Activated T-helper 1 cell treated with anti-CD3 and anti-CD28 coated beads, Interleukin-12 subunit alpha, Interleukin-12 subunit beta, Interleukin-2, Interleukin-4 antibody, amounts not matched to agents 30 ng/mL and 10 ng/mL and 1 ng/mL, durations not matched to agents 14 hours and 24 hours and 36 hours (primary cell): ENCODE measurements at regions of chr1 and their contacts with region 1.

Region 1: GRCh38 chr1:32394141-32394889 is at the start of gene BSDC1:
- DNase-seq: peak; percentile 98
- H3K4me3 Mint-ChIP-seq: peak within 1 kb of the TSS; percentile 97
- H3K27ac Mint-ChIP-seq: peak within 1 kb of the TSS; percentile 99
- H3K4me1 Mint-ChIP-seq: peaks cover 16% of the 10 kb centered on the region
- H3K27me3 Mint-ChIP-seq: peaks cover 7% of the 10 kb centered on the region
- total RNA-seq, gene BSDC1: 48.8 and 50.3 TPM in 2 replicates

Region 2: DNA sequence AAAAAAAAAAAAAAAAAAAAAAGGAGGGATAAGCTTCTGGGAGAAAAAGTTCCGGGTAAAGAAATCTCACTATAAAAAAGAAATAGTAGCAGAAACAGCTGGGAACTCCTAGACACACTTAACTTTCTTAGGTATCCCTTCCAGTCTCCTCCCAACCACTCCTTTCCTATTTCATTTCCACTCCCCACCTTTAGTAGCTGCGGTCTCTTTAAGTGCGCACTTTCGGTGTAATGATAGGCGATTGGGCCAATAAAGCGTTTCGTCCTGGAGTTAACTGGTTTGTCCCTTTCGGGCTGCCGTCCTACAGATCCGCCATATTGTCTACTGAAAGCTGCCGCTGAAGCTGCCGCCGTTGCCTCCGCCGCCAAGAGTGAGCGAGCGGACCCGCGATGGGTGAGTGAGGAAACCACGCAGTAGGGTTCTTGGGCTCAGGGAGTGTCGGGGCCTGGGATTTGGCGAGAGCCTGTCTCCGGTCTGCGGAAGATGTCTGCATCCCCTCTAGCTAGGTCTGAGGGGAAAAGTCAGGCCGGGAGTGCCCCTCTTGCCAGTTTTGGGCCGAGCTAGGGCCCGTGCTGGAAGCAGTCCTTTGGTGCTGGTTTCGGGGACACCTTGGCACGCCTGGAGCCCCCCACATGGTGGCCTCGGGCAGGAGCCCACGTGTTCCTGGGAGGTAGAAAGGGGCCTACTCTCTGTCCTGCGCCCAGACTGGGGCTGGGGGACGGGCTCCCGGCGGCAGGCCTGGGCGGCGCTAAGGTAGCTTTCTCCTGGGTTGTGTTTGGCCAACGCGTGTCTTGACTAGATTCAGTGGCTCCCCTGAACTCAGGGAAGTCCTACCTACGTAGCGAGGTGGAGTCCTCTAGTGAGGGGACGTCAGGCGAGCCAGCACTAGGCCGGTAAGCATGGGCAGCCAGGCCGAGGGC is 286.3 kb before region 1 on chr1 and contains the start of gene KPNA6:
- intact Hi-C with region 1: loop called (anchors 1 kb)
- DNase-seq: peak; percentile 89
- H3K4me3 Mint-ChIP-seq: peak within 1 kb of the TSS; percentile 98
- H3K27ac Mint-ChIP-seq: peak within 1 kb of the TSS; percentile 94
- H3K4me1 Mint-ChIP-seq: peaks cover 43% of the 10 kb centered on the region
- H3K27me3 Mint-ChIP-seq: no peaks in the 10 kb centered on the region
- total RNA-seq, gene KPNA6: 76.7 and 78.6 TPM in 2 replicates

Region 3: GRCh38 chr1:32200226-32201010 is 193.9 kb before region 1 on chr1 and contains the start of gene CCDC28B:
- intact Hi-C with region 1: loop called (anchors 1 kb)
- DNase-seq: peak; percentile 55
- H3K4me3 Mint-ChIP-seq: peak within 1 kb of the TSS; percentile 92
- H3K27ac Mint-ChIP-seq: peak within 1 kb of the TSS; percentile 97
- H3K4me1 Mint-ChIP-seq: peaks cover 69% of the 10 kb centered on the region
- H3K27me3 Mint-ChIP-seq: no peaks in the 10 kb centered on the region
- total RNA-seq, gene CCDC28B: 28.2 and 32.6 TPM in 2 replicates

Region 4: DNA sequence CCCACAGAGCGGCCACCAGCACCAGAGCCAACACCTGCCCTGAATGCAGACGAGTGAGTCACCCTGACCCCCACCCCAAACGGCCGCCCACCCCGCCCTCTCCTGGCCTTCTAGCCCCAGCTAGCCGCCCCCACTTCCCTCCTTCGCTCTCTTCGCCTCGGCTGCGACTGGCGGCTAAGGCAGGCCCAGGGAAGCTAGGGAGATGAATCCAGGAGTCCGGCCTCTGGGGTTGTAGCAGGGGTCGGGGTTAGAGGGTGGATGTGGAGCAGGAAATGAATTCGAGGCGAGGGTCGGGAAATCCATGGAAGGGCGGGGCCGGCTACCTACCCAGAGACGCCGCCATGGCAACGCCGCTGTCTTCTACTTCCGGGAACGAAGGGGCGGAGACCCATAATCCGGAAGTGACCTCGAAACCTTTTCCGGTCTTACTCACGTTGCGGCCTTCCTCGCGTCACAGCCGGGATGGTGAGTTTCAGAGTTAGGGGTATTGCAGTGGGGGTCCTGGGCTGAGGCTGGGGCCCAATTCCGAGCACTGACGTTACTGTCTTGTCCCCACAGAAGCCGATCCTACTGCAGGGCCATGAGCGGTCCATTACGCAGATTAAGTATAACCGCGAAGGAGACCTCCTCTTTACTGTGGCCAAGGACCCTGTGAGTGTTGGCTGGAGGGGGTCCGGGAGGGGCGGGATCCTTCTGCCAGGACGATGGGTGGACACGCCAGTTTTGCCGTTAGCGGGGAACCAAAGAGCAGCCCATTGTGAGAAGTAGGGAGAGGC is 172.1 kb before region 1 on chr1 and contains the starts of genes EIF3I and TMEM234:
- intact Hi-C with region 1: loop called (anchors 1 kb)
- DNase-seq: peak; percentile 89
- H3K4me3 Mint-ChIP-seq: peak within 1 kb of the TSS; percentile 98
- H3K27ac Mint-ChIP-seq: peak within 1 kb of the TSS; percentile 95
- H3K4me1 Mint-ChIP-seq: peaks cover 25% of the 10 kb centered on the region
- H3K27me3 Mint-ChIP-seq: no peaks in the 10 kb centered on the region
- total RNA-seq, gene EIF3I: 297 TPM in 2 replicates
- total RNA-seq, gene TMEM234: 13.5 and 15.0 TPM in 2 replicates

Region 5: GRCh38 chr1:32330674-32331073 is 63.6 kb before region 1 on chr1:
- intact Hi-C with region 1: no loop called
- DNase-seq: no peak
- H3K4me3 Mint-ChIP-seq: no peak overlapping the region
- H3K27ac Mint-ChIP-seq: no peak overlapping the region
- H3K4me1 Mint-ChIP-seq: peaks cover 23% of the 10 kb centered on the region
- H3K27me3 Mint-ChIP-seq: no peaks in the 10 kb centered on the region

Region 6: DNA sequence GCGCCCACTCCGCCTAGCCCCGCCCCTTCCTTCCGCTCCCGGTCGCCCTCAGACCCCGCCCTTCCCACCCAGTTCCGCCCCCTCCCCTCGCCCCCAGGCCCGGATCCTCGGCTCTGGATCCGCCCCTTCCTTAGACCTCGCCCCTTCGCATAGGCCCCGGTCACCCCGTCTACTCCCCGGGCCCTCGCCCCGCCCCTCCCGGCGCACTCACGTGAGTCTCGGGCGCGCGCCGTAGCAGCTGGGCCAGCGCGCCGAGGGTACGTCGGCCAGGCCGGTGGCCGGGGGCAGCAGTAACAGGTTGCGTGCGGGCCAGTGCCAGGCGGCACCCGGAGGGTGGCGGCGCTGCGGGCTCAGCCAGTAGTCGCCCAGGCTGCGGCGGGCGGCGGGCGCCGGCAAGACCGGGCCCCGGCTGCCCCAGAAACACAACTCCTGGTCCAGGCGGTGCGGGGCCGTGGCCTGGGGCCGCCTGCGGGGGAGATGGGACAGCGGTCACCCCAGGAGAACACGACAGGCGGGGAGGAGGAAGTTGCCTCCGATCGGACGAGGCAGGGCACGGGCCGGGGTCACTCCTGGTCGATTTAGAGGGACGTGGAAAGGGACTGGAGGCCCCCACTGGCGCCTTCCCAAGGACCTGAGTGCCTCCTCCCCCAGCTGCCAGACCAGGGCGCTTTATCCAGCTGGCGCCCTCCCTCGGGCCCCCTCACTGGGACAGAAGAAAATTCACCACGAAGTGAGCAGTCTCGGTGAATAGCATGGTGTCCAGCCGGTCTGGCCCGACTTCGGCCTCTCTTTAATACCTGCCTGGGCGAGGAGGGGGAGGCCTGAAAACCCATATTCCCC is 42.7 kb before region 1 on chr1:
- intact Hi-C with region 1: loop called (anchors 1 kb)
- DNase-seq: peak; percentile 89
- H3K4me3 Mint-ChIP-seq: peak overlapping the region; percentile 82
- H3K27ac Mint-ChIP-seq: peak overlapping the region; percentile 53
- H3K4me1 Mint-ChIP-seq: peaks cover 35% of the 10 kb centered on the region
- H3K27me3 Mint-ChIP-seq: peaks cover 6% of the 10 kb centered on the region

Region 7: DNA sequence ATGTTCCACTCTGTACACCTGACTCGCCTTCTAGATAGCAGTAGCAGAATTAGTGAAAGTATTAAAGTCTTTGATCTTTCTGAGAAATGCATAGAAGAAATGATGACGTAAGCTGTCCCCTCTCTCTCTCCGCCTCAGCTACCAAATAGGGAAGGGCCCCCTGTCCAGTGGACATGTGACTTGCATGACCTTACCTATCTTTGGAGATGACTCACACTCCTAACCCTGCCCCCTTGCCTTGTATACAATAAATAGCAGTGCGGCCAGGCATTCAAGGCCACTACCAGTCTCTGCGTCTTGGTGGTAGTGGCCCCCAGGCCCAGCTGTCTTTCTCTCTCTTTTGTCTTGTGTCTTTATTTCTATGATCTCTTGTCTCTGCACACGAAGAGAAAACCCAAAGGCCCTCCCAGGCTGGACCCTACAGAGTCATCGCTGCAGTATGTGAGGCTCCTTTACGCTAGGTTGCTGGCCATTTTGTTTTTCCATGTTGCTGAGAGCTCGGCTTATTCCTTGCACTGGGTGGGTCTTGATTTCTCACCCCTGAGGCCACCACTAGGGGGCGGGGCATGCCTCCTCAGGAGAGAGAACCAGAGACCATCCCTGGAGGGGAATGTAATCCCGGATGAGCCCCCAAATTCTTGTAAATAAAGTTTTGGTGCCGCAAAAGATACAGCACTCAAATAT is 54.6 kb after region 1 on chr1:
- intact Hi-C with region 1: no loop called
- DNase-seq: no peak
- H3K4me3 Mint-ChIP-seq: no peak overlapping the region
- H3K27ac Mint-ChIP-seq: no peak overlapping the region
- H3K4me1 Mint-ChIP-seq: no peaks in the 10 kb centered on the region
- H3K27me3 Mint-ChIP-seq: peaks cover 21% of the 10 kb centered on the region